Posterior cingulate gyrus (tissue), 11 donors: ENCODE measurements at regions of chr12 and their contacts with region 1.

Region 1: DNA sequence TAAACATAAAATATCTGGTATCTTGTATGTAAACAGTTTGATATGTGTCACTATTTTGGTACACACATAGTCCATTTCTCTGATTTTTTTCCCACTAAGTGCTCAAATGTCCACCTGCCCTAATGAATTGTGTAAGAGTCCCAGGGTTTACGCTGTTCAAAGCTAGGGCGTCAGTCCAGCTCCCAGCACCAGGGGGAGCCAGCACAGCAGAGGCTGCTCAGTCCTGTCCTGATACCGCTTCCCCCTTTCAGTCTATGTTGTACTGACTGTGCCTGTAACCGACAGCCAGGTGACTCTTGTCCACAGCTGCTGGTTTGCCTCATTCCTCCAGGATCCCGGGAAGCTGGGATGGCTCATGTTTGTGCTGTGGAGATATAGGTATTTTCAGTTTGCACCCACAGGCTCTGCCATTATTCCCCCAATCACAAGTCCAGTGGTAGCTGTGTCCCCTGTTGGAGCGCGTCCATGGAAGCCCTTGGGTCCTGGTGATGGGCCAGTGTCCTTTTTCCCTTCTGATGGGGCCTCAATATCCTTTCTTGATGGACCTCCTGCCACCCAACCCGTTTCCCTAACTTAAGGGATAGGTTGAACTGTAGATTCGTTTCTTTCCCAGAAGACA is 242.0 kb downstream of the NEDD1 start:
- DNase-seq: peak in 7 of 10 donors; percentile 17 to 90 (median 68)

Region 2: GRCh38 chr12:97308576-97309198 is 159.6 kb after region 1 on chr12:
- intact Hi-C with region 1: loop called (anchors 1 kb)
- DNase-seq: no peak

Region 3: GRCh38 chr12:97404543-97404942 is 255.5 kb after region 1 on chr12:
- intact Hi-C with region 1: loop called (anchors 10 kb)
- DNase-seq: peak in 6 of 10 donors; percentile 9 to 74 (median 40)

Region 4: DNA sequence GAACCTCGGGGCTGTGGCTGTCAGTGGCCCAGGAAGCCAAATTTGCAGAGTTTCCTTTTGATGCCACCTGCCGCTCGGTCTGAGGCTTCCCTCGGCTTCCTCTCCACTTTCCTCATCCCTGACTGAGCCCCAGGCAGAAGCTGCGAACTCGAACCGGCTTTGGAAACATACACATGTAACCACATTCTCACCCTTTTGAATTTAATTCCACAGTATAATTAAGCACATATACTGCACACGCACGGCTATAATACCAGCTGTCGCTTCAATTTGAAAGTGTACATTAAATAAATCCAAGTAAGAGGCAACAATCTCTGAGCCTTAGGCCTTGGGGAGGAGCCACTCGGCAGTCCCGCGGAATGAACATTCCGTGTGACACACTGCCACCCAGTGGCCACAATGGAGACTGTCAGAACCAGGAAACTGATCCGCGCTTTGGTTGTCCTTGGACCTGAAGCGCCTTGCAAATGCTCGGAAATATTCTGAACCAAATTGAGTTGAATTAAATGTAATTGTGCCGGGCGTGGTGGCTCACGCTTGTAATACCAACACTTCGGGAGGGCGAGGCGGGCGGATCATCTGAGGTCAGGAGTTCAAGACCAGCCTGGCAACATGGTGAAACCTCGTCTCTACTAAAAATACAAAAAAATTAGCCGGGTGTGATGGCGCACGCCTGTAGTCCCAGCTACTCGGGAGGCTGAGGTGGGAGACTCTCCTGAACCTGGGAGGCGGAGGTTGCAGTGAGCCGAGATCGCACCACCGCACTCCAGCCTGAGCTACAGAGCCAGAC is 1248.5 kb after region 1 on chr12:
- intact Hi-C with region 1: loop called (anchors 2 kb)
- DNase-seq: peak; percentile 57 to 96 (median 84)